Posterior vena cava (tissue), 2 donors: ENCODE measurements at regions of chr6 and their contacts with region 1.

Region 1: GRCh38 chr6:164570801-164571200 is 738.6 kb downstream of the C6orf118 start:
- DNase-seq: no peak

Region 2: GRCh38 chr6:164085091-164086075 is 485.4 kb before region 1 on chr6:
- intact Hi-C with region 1: no loop called
- DNase-seq: peak; percentile 95

Region 3: DNA sequence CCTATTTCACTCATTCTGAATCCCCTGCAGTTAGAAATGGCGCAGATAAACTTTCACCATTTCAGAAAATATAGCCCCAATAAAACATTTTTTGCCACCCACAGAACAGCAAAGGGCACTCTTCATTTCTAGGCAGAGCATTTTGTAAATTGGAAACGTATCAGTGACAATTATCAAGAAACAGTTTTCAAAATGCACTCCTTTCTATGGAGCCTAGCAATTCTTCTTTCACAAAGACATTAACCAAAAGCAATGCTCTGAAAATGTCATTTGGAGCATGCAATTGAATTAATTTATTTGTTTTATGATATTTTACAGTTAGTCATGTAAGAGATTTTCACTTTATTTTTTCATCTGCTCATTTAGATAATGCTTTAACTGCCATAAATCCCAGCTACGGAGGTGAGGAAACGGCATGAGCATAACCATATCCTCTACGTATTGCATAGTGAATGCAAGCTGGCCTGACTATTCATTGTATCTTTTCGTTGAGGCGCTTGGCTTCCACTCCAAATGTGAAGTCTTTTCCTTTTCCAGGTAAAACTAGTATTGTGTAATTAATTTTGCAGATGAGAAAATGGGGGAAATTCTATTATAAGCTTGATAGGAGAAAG is 74.8 kb before region 1 on chr6:
- intact Hi-C with region 1: loop called in 1 of 2 experiments (anchors 2 kb)
- DNase-seq: no peak

Region 4: GRCh38 chr6:164807125-164807524 is 236.3 kb after region 1 on chr6:
- intact Hi-C with region 1: no loop called
- DNase-seq: no peak